ENCODE measurements at regions of chr15 and their contacts with region 1.

Region 1: GRCh38 chr15:82985688-82986441 is at the start of gene RAMAC:
- DNase-seq: peak; percentile 90 to 98 (median 93)
- H3K4me3 ChIP-seq: peak within 1 kb of the TSS; percentile 87 to 91
- H3K4me3 Mint-ChIP-seq: peak within 1 kb of the TSS; percentile 96 to 99 (median 99)
- H3K27ac ChIP-seq: peak within 1 kb of the TSS; percentile 71
- H3K27ac Mint-ChIP-seq: peak within 1 kb of the TSS; percentile 91 to 99 (median 96)
- H3K4me1 ChIP-seq: peaks cover 18% of the 10 kb centered on the region
- H3K4me1 Mint-ChIP-seq: peaks cover 15 to 32% (median 25%) of the 10 kb centered on the region in 4 donors
- H3K27me3 ChIP-seq: no peaks in the 10 kb centered on the region
- H3K27me3 Mint-ChIP-seq: no peaks in the 10 kb centered on the region
- total RNA-seq, gene RAMAC: 19.3 to 22.0 TPM

Region 2: GRCh38 chr15:82730022-82730530 is 255.8 kb before region 1 on chr15:
- CTCF ChIA-PET with region 1: no interaction called
- POLR2A ChIA-PET with region 1: no interaction called
- intact Hi-C with region 1: no loop called
- DNase-seq: no peak
- H3K4me3 ChIP-seq: no peak overlapping the region
- H3K4me3 Mint-ChIP-seq: no peak overlapping the region
- H3K27ac ChIP-seq: no peak overlapping the region
- H3K27ac Mint-ChIP-seq: no peak overlapping the region
- H3K4me1 ChIP-seq: no peaks in the 10 kb centered on the region
- H3K4me1 Mint-ChIP-seq: peaks cover 0 to 1% (median 0%) of the 10 kb centered on the region in 4 donors
- H3K27me3 ChIP-seq: no peaks in the 10 kb centered on the region
- H3K27me3 Mint-ChIP-seq: no peaks in the 10 kb centered on the region

Region 3: GRCh38 chr15:82749951-82750830 is 235.7 kb before region 1 on chr15:
- CTCF ChIA-PET with region 1: no interaction called
- POLR2A ChIA-PET with region 1: interaction called, 8 read pairs
- intact Hi-C with region 1: loop called (anchors 5 kb)
- DNase-seq: peak; percentile 65 to 87 (median 73)
- H3K4me3 ChIP-seq: peak overlapping the region; percentile 82 to 86
- H3K4me3 Mint-ChIP-seq: peak overlapping the region; percentile 96 to 100 (median 99)
- H3K27ac ChIP-seq: peak overlapping the region; percentile 74
- H3K27ac Mint-ChIP-seq: peak overlapping the region; percentile 77 to 99 (median 95)
- H3K4me1 ChIP-seq: peaks cover 23% of the 10 kb centered on the region
- H3K4me1 Mint-ChIP-seq: peaks cover 26 to 55% (median 40%) of the 10 kb centered on the region in 4 donors
- H3K27me3 ChIP-seq: no peaks in the 10 kb centered on the region
- H3K27me3 Mint-ChIP-seq: no peaks in the 10 kb centered on the region

Region 4: DNA sequence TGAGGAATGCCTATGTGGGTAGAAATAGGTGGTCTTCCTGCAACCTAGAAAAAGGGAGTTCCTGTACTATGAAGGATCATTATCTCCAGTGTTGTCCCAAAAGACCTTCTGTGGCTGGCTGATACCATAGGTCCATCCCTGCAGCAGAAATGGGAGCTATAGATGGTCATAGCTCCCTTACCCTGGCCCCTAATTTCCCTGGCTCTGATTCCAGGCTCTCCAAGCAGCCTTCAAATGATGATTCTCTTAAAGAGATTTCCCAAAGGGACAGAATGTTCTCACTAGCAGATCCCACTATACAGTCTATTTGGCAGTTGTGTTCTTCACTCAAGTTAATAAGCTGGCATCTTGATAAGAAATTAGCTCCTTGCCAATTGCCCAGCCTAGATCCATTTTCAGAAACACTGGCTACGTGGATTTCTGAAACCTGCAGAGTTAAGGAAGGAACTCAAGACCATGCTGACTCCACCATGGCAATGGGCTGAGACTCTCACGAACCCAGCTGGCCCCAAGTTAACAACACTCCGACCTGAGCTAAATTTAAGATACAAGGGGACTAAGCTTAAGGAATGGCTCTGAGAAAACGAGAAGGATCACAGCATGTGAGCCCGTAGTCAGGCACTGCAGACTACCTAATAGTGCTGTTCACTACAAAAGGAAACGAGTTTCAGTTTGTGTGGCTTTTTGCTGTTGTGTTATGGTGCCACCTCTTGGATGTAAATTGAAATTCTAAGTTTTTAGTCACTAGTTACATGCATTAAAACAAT is 14.2 kb after region 1 on chr15:
- CTCF ChIA-PET with region 1: interaction called, 24 read pairs
- POLR2A ChIA-PET with region 1: interaction called, 8 read pairs
- intact Hi-C with region 1: loop called (anchors 2 kb)
- DNase-seq: peak in 4 of 5 donors; percentile 48 to 52 (median 50)
- H3K4me3 ChIP-seq: peak overlapping the region; percentile 1 to 48
- H3K4me3 Mint-ChIP-seq: peak overlapping the region in 7 of 8 donors; percentile 66 to 84 (median 79)
- H3K27ac ChIP-seq: peak overlapping the region; percentile 10
- H3K27ac Mint-ChIP-seq: peak overlapping the region; percentile 51 to 94 (median 89)
- H3K4me1 ChIP-seq: peaks cover 9% of the 10 kb centered on the region
- H3K4me1 Mint-ChIP-seq: peaks cover 6 to 12% (median 9%) of the 10 kb centered on the region in 4 donors
- H3K27me3 ChIP-seq: no peaks in the 10 kb centered on the region
- H3K27me3 Mint-ChIP-seq: no peaks in the 10 kb centered on the region

Region 5: DNA sequence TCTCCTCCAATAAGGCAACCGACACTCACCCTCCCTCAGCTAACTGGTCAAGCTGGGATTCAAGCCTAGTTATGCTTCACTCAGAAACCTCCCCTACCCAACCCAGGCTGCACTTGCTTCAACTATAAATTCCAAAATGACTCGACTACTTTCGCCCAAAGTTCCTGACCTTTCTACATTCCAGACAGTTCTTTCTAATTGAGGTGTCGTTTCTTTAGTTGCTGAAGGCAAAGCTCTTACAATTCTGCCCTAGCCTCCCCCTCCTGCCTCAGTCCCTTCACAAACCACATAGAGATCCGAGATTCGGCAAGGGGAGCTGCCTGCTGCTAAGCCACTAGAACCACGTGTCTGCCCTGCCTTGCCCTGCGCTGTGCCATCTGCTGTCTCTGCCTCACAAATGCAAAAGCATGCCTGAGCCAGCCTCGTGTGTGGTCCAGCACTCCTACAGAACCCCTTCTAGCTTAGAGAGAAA is 386.6 kb after region 1 on chr15:
- CTCF ChIA-PET with region 1: no interaction called
- POLR2A ChIA-PET with region 1: no interaction called
- intact Hi-C with region 1: no loop called
- DNase-seq: no peak
- H3K4me3 ChIP-seq: no peak overlapping the region
- H3K4me3 Mint-ChIP-seq: no peak overlapping the region
- H3K27ac ChIP-seq: no peak overlapping the region
- H3K27ac Mint-ChIP-seq: no peak overlapping the region
- H3K4me1 ChIP-seq: no peaks in the 10 kb centered on the region
- H3K4me1 Mint-ChIP-seq: no peaks in the 10 kb centered on the region
- H3K27me3 ChIP-seq: peaks cover 6% of the 10 kb centered on the region
- H3K27me3 Mint-ChIP-seq: peaks cover 27 to 40% of the 10 kb centered on the region in 2 donors

Measured in CD4-positive, alpha-beta memory T cell (primary cell).